Calu3 (cell line): ENCODE measurements at regions of chr2 and their contacts with region 1.

Region 1: DNA sequence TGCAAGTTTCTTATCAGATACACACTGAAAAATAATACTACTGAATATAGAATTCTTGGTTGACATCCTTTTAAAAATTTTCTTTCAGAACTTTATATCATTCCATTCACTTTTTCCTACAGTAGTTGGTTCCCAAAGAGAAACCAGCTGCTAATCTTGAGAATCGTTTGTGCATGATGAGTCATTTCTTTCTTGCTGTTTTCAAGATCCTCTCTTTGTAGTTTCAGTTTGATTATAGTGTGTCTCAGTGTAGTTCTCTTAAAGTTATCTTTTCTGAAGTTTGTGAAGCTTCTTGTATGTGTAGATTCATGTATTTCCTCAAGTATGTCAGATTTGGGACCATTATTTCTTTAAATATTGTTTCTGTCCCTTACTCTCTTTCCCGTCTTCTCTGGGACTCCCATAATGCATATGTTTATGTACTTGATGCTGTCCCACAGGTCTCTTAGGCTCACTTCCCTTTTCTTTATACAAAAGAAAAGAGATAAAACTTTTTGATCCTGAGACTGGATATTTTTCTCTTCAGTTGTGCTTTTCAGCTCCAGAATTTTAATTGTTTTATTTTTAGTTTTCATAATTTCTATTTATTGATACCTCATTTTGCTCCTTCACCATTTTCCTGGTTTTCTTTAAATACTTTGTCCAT is 801.0 kb downstream of the TDRD15 start:
- DNase-seq: no peak
- H3K4me3 Mint-ChIP-seq: no peak overlapping the region
- H3K27ac Mint-ChIP-seq: no peak overlapping the region
- H3K4me1 Mint-ChIP-seq: no peaks in the 10 kb centered on the region
- H3K27me3 Mint-ChIP-seq: no peaks in the 10 kb centered on the region
- CTCF ChIP-seq: no peak

Region 2: GRCh38 chr2:22198381-22199283 is 273.9 kb after region 1 on chr2:
- CTCF ChIA-PET with region 1: no interaction called
- intact Hi-C with region 1: loop called (anchors 10 kb)
- DNase-seq: no peak
- H3K4me3 Mint-ChIP-seq: no peak overlapping the region
- H3K27ac Mint-ChIP-seq: no peak overlapping the region
- H3K4me1 Mint-ChIP-seq: no peaks in the 10 kb centered on the region
- H3K27me3 Mint-ChIP-seq: no peaks in the 10 kb centered on the region
- CTCF ChIP-seq: no peak